Esophagus squamous epithelium (tissue), 5 donors: ENCODE measurements at regions of chr19 and their contacts with region 1.

Region 1: GRCh38 chr19:41439441-41440222 is at the start of gene DMAC2:
- DNase-seq: peak; percentile 86
- H3K4me3 ChIP-seq: peak within 1 kb of the TSS; percentile 74 to 95 (median 82)
- H3K27ac ChIP-seq: peak within 1 kb of the TSS; percentile 97 to 98 (median 97)
- H3K4me1 ChIP-seq: peaks cover 5 to 31% (median 7%) of the 10 kb centered on the region in 3 donors
- H3K27me3 ChIP-seq: peaks cover 0 to 14% (median 0%) of the 10 kb centered on the region in 4 donors
- CTCF ChIP-seq: peak; percentile 20 to 60 (median 46)
- POLR2A ChIP-seq: peak in 2 of 4 donors; percentile 59 to 75
- total RNA-seq, gene DMAC2: 25.1 to 41.4 (median 35.7) TPM

Region 2: DNA sequence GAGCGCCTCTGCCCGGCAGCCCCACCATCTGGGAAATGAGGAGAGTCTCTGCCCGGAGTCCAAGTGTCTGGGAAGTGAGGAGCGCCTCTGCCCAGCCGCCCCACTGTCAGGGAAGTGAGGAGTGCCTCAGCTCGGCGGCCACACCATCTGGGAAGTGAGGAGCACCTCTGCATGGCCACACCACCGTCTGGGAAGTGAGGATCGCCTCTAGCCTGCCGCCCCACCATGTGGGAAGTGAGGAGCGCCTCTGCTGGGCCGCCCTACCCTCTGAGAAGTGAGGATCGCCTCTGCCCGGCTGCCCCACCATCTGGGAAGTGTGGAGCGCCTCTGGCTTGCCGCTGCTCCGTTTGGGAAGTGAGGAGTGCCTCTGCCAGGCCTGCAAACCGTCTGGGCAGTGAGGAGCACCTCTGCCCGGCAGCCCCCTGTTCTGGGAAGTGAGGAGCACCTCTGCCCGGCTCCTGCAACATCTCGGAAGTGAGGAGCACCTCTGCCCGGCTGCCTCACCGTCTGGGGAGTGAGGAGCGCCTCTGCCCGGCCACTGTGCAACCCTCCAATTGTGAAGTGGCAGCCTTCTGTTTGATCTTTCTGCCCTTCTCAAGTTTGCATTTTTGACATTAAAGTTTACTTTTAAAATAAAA is 75.5 kb after region 1 on chr19:
- intact Hi-C with region 1: no loop called
- DNase-seq: no peak
- H3K4me3 ChIP-seq: no peak overlapping the region
- H3K27ac ChIP-seq: no peak overlapping the region
- H3K4me1 ChIP-seq: no peaks in the 10 kb centered on the region
- H3K27me3 ChIP-seq: peaks cover 0 to 89% (median 0%) of the 10 kb centered on the region in 4 donors
- CTCF ChIP-seq: no peak
- POLR2A ChIP-seq: no peak

Region 3: DNA sequence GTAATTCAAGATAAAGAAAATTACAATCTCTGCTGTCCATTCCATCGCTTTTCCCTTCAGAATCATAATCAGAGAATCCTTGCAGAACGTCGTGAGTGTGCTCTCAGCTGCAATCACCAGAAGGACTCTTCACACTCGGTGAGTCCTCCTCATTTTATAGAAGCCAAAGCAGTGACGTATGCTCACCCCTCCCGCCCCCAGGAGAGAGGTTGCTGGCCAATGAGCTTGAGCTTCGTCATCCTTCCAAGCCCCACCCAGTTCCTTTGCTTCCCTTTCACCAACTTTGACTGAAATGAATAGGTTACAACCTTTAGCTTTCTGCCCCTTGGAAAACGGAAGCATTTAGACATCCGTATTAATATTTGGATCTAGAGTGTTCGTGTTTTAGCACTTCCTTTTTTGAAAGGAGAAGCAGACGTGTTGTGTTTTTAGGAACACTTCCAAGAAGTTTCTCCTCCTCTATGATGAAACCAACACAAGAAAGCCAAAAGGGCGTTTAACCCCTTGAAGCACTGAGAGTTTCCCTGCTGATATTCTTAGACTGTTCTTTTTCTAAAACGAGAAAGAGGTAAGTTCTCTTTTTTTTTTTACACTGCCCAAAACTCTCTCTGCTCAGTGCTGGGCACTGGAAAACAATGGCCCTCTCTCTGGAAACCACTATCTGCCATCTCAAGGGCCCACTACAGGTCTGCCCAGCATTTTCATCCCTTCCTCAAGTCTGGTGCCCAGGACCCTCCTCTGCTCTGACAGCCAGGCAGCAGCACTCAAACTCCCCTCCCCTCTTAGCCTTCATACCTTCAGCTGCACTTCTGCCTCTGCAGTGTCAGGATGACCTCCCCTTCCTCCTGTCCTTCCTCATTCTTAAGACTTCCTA is 92.0 kb after region 1 on chr19:
- intact Hi-C with region 1: no loop called
- DNase-seq: peak; percentile 43
- H3K4me3 ChIP-seq: peak overlapping the region in 2 of 4 donors; percentile 8 to 50
- H3K27ac ChIP-seq: peak overlapping the region; percentile 49 to 86 (median 68)
- H3K4me1 ChIP-seq: peaks cover 0 to 17% (median 15%) of the 10 kb centered on the region in 3 donors
- H3K27me3 ChIP-seq: peaks cover 0 to 37% (median 0%) of the 10 kb centered on the region in 4 donors
- CTCF ChIP-seq: no peak
- POLR2A ChIP-seq: peak in 3 of 4 donors; percentile 78 to 84 (median 84)

Region 4: GRCh38 chr19:41563854-41564514 is 124.4 kb after region 1 on chr19:
- intact Hi-C with region 1: loop called (anchors 10 kb)
- DNase-seq: no peak
- H3K4me3 ChIP-seq: peak overlapping the region in 2 of 4 donors; percentile 6 to 40
- H3K27ac ChIP-seq: no peak overlapping the region
- H3K4me1 ChIP-seq: peaks cover 4 to 23% (median 9%) of the 10 kb centered on the region in 3 donors
- H3K27me3 ChIP-seq: peaks cover 6 to 84% (median 18%) of the 10 kb centered on the region in 4 donors
- CTCF ChIP-seq: no peak
- POLR2A ChIP-seq: no peak